ENCODE measurements at regions of chr7 and their contacts with region 1.

Region 1: DNA sequence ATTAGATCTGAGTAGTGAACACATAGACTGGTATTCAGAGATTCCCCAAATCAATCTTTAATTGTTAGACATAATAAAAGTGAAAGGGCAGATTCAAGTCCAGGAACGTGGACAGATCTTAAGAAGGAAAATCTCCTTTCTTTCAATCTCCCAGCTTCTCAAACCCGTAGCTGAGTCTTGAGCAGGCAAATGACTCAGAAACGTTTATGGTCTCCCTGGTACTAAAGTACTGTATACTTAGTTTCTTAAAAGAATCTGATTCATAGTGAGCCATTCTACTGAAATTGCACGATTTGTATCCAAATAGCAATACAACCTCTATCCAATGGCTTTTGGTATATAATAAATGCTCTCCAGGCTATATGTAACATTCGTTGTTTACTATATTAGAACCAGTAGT is 140.4 kb upstream of the RHEB start:
- DNase-seq: no peak
- H3K4me3 ChIP-seq: no peak overlapping the region
- CTCF ChIP-seq: no peak

Region 2: DNA sequence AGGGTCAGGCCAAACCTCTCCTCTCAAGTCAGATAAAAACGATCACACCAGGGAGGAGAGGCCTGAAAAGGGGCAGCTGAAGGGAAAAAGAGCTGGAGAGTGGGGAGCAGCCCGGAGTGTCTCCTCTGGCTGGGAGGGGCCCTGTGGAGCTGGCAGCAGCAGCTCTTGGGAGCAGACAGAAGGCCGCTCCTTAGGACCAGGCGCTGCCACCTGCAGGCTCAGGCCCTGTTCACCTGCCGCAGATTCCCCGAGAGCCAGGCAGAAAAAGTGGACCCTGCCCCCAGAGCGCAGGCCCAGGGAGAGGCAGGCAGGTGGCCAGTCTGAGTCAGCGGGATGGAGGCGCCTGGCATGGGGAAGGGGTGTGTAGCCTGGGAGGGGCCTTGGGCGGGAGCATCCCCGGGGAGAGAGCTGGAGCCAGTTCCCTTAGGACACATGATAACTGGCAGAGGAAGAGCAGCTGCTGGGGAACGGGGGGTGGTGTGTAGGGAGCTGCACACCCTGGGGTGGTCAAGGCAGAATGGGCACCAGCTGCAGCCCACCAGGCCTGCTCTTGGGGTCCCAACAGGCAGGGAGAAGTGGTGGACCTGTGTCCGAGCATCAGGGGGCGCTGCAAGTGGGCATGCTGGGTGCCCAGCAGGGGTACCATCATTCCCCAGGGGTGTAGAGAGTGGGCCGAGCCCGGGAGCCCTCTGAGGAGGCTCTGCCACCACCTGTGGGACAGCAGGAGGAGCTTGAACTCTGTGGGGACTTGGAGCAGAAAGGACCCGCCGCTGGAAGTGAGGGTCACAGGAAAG is 36.8 kb after region 1 on chr7:
- in situ Hi-C with region 1: no loop called
- DNase-seq: no peak
- H3K4me3 ChIP-seq: no peak overlapping the region
- CTCF ChIP-seq: no peak

Region 3: DNA sequence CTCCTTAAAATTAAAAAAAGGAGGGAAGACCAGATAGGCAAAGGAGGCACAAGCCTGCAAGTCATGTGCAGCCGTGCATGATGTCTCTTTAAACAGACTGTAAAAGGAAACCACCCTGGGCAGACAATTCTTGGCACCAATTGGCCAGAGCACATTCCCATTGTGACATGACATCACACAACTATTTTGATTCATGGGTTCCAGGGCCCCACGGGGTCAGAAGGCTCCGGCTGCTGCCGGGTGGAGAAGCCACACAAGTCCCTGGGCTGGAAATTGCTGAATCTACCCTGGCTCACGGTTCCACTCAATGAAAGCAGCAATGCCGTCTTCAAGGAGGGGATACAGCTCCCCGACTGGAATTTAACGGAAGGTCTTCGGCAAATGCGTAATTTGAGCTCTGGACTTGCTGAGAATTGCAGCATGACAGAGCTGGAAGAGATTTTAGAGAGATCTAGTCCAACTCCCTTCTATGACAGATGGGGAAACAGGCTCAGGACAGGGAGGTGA is 76.3 kb after region 1 on chr7:
- in situ Hi-C with region 1: loop called (anchors 5 kb)
- DNase-seq: peak; percentile 92
- H3K4me3 ChIP-seq: no peak overlapping the region
- CTCF ChIP-seq: peak; percentile 50